ENCODE measurements at regions of chr4 and their contacts with region 1.

Region 1: DNA sequence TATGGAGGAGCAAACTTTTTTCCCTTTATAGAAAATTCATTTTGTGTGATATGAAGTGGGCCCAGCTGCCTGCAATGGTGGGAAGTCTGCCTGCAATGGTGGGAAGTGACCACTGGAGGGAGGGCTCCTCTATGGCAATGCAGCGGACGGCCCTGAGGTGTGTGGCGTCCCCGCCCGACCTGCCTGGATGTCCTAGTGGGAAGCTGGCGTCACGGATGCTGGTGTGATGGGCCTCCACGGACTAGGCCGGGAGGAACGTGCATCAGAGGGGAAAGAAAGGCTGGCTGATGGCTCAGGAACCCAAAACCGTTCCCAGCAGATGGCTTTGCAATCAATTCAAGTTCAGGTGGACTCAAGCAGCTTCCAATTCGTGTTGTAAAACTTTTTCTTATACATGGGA is 177.9 kb downstream of the AFAP1 start:
- DNase-seq: peak; percentile 87

Region 2: DNA sequence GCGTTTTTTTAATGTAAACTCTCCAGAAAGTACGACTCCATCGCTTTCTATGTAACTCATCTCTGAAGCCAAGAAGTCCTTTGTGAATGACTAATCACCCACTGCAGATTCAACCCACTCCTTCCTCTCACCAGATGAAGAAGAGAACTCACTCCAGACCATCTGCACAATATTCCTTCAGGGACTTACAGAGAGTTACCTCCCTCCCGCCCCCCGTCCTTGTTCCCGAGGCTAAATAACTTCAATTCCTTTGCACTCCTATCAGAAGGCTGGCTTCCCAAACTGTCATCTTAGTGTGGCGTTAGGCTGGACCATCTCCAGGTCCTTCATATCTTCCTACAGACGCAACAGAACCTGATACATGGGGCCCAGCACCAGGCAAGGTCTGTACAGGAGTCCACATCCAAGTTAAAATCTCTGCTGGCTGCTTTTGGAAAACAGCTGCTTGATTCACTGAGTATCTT is 95.5 kb after region 1 on chr4:
- intact Hi-C with region 1: loop called (anchors 5 kb)
- DNase-seq: no peak

Region 3: GRCh38 chr4:7987148-7987989 is 225.6 kb after region 1 on chr4:
- intact Hi-C with region 1: loop called (anchors 5 kb)
- DNase-seq: peak; percentile 82